MCF 10A (cell line): ENCODE measurements at regions of chr6 and their contacts with region 1.

Region 1: DNA sequence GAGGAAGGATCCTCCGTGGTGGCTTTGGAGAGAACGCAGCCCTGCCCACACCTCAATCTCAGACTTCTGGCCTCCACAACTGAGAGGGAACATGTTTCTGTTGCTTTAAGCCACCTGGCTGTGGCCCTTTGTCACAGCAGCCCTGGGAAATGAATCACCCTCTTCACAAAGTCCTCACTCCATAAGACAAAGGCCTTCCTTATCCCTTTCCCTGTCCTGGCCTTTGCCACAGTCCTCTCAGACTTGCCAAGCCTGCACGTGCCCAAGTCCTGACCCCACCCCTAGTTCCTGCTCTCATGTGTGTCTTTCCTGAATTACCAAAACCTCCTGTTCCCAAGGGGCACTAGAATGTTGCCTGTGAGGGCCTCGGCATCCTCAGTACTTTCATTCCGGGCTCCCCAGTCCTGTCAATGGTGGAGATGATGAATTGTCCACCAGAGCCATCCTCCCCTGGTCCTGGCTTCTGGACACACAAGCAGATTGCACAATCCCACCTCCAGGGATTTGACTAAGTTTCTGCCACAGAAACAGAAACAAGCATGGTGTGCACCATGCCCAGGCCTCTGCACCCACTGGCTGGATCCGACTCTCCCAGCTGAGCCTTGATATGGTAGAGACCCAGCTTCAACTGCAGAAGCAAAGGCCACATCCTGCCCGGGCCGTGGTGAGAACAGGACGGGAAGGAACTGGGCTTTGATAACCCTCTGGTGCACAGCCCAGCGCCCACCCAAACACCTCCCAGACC is 232.6 kb upstream of the PDE10A start:
- DNase-seq: peak; percentile 57
- H3K4me3 Mint-ChIP-seq: no peak overlapping the region
- H3K27ac Mint-ChIP-seq: peak overlapping the region; percentile 38
- H3K4me1 Mint-ChIP-seq: peaks cover 6% of the 10 kb centered on the region
- H3K27me3 Mint-ChIP-seq: no peaks in the 10 kb centered on the region
- CTCF ChIP-seq: no peak

Region 2: DNA sequence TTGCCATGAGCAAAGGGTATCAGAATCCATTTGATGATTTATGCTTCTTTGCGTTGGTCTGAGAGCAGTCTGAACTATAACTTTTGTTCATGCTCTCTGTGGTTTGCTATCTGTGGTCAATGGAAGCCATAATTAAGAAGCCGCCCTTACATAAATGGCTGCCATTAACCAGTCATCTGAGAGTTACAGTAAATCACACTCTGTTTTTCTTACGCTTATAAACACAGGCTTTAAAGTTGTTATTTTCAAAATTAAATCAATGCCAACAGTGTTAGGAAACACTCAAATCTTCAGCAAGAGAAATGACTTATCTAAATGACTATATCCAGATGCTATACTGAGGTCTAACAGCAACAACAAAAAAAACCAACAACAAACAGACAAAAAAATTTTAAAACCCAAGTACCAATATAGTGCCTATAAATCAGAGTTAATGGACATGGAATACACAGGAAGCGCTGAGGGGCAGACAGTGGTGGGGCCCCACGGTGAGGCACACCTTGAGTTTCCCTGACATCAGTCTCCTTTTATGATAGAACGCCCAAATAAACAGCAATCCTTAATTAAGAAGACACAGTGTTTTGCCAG is 478.2 kb before region 1 on chr6:
- CTCF ChIA-PET with region 1: interaction called, 11 read pairs
- POLR2A ChIA-PET with region 1: no interaction called
- intact Hi-C with region 1: no loop called
- DNase-seq: no peak
- H3K4me3 Mint-ChIP-seq: no peak overlapping the region
- H3K27ac Mint-ChIP-seq: no peak overlapping the region
- H3K4me1 Mint-ChIP-seq: no peaks in the 10 kb centered on the region
- H3K27me3 Mint-ChIP-seq: no peaks in the 10 kb centered on the region
- CTCF ChIP-seq: no peak

Region 3: DNA sequence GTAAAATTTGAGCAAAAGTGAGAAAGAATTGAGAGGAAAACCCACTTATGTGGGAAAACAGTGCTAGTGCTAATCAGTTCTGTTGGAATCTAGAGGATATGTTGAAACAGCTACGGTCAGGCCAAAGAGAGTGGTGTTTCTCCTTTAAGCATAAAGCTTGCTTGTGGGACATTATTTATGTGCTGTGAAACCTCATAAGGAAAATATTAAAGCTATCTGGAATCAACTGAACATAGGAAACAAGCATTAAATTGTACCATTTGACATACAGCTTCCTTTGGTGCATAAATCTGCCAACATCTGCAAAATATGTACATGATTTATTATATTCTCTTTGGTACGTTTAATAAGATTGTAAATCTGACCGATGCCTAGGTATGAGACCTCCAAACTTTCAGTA is 50.1 kb before region 1 on chr6:
- CTCF ChIA-PET with region 1: no interaction called
- POLR2A ChIA-PET with region 1: no interaction called
- intact Hi-C with region 1: no loop called
- DNase-seq: no peak
- H3K4me3 Mint-ChIP-seq: no peak overlapping the region
- H3K27ac Mint-ChIP-seq: no peak overlapping the region
- H3K4me1 Mint-ChIP-seq: no peaks in the 10 kb centered on the region
- H3K27me3 Mint-ChIP-seq: no peaks in the 10 kb centered on the region
- CTCF ChIP-seq: no peak